SK-N-SH (cell line): ENCODE measurements at regions of chr17 and their contacts with region 1.

Region 1: DNA sequence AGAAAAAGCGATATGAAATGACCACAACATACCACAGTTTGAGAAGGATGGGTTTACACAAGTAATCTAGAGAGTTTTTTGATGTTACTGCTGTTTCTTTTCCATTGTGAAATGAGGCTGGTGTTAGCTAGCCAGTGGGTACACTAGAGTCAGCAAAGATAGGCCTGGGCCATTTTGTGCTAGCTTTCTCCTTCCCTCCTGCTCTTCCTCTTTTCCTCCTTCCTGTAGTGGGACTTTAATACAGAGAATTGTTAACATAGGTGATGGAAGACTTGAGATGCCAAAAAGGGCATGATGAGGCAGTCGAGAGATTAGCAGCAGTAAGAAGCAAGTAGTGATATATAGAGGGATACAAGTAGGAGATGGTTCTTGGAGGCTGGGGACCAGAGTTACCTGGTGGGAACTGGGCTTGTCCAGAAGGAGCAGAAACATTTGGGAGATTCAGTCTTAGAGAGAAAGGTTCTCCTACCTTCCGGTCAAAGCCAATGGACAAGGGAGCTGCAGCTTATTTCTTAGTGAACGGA is 7.7 kb downstream of the NSRP1 start:
- DNase-seq: no peak
- H3K4me3 ChIP-seq: no peak overlapping the region
- H3K27ac ChIP-seq: no peak overlapping the region; a peak in 1 of 4 replicates
- H3K4me1 ChIP-seq: peaks cover 0 to 3% of the 10 kb centered on the region in 2 experiments; a peak in 2 of 4 replicates
- H3K27me3 ChIP-seq: no peaks in the 10 kb centered on the region
- CTCF ChIP-seq: no peak
- EP300 ChIP-seq: no peak
- RAD21 ChIP-seq: no peak

Region 2: DNA sequence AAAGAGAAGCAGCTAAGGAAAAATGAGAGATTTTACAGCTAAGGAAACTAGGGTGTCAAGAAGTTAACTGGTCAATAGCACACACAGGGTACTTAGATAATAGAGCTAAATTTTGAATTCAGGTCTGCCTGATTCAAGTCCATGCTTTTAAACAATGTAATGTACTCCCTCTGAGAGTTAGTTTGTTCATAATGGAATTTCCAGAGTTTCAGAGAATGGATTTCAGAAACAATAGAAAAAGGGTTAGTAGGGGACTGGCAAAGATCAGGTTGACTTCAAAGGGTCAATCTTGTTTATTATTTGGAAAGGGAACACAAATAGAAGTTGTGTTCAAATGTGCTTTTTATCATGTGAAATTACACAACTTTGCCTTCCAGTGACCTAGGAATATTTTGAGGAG is 10.2 kb after region 1 on chr17:
- CTCF ChIA-PET with region 1: interaction called, 31 read pairs
- POLR2A ChIA-PET with region 1: no interaction called
- DNase-seq: no peak
- H3K4me3 ChIP-seq: no peak overlapping the region
- H3K27ac ChIP-seq: no peak overlapping the region
- H3K4me1 ChIP-seq: no peaks in the 10 kb centered on the region; a peak in 1 of 4 replicates
- H3K27me3 ChIP-seq: no peaks in the 10 kb centered on the region
- CTCF ChIP-seq: no peak
- EP300 ChIP-seq: no peak
- RAD21 ChIP-seq: no peak

Region 3: GRCh38 chr17:30173649-30174048 is 49.3 kb after region 1 on chr17:
- CTCF ChIA-PET with region 1: interaction called, 10 read pairs
- POLR2A ChIA-PET with region 1: no interaction called
- DNase-seq: no peak
- H3K4me3 ChIP-seq: no peak overlapping the region
- H3K27ac ChIP-seq: no peak overlapping the region
- H3K4me1 ChIP-seq: no peaks in the 10 kb centered on the region
- H3K27me3 ChIP-seq: no peaks in the 10 kb centered on the region
- CTCF ChIP-seq: no peak
- EP300 ChIP-seq: no peak
- RAD21 ChIP-seq: no peak

Region 4: GRCh38 chr17:30236766-30237165 is 112.4 kb after region 1 on chr17:
- CTCF ChIA-PET with region 1: interaction called, 65 read pairs
- POLR2A ChIA-PET with region 1: no interaction called
- DNase-seq: peak; percentile 87
- H3K4me3 ChIP-seq: no peak overlapping the region; a peak in 2 of 4 replicates
- H3K27ac ChIP-seq: no peak overlapping the region
- H3K4me1 ChIP-seq: peaks cover 0 to 8% of the 10 kb centered on the region in 2 experiments; a peak in 1 of 4 replicates
- H3K27me3 ChIP-seq: peaks cover 24% of the 10 kb centered on the region
- CTCF ChIP-seq: peak; percentile 29
- EP300 ChIP-seq: no peak
- RAD21 ChIP-seq: peak; percentile 68

Region 5: DNA sequence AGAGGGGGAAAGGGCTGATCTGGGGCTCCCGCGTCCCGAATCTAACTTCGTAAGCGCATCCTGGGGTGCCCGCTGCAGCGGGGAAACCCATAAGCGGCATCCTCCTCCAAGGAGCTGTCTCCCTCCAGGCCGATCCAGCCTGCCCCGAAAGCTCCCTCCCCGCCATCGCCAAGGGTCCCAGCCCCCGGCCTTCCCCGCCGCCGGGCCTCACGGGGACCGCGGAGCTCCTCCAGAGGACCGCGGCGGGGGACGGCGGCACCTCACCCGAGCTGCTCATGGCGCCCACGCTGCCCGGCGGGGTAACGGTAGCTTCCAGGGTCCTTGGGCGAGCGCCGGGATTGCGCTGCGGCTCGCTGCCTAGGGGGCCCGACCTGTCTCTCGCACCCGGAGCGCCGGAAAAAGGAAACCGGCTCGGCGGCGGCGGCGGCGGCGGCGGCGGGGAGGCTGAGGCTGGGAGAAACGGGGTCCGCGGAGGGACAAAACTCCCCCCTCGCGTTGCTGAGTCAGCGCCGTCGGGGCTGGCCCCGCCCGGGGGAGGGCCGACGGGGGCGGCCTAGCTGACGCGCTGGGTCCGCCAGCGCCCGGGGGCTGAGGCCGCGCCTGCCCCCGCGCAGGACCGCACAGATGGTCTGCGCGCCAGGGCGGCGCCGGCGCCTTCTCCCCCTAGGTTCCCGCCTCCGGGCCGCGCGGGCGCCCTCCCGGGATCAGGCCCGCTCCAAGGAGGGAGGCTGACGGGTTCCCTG is 167.4 kb after region 1 on chr17 and contains the start of gene BLMH:
- CTCF ChIA-PET with region 1: interaction called, 11 read pairs
- POLR2A ChIA-PET with region 1: no interaction called
- DNase-seq: peak; percentile 94
- H3K4me3 ChIP-seq: peak within 1 kb of the TSS; percentile 88 to 91
- H3K27ac ChIP-seq: peak within 1 kb of the TSS; percentile 36 to 63; a peak in 3 of 4 replicates
- H3K4me1 ChIP-seq: peaks cover 0 to 15% of the 10 kb centered on the region in 2 experiments; a peak in 2 of 4 replicates
- H3K27me3 ChIP-seq: no peaks in the 10 kb centered on the region
- CTCF ChIP-seq: no peak
- EP300 ChIP-seq: peak in 1 of 2 experiments; percentile 79; a peak in 2 of 4 replicates
- RAD21 ChIP-seq: no peak
- polyA plus RNA-seq, gene BLMH: 19.4 and 19.5 TPM in 2 replicates